Naive thymus-derived CD4-positive, alpha-beta T cell (primary cell): ENCODE measurements at regions of chr2 and their contacts with region 1.

Region 1: GRCh38 chr2:37506407-37507050 is 162.1 kb downstream of the QPCT start:
- DNase-seq: no peak
- ATAC-seq: no peak
- H3K4me3 ChIP-seq: no peak overlapping the region
- H3K4me3 Mint-ChIP-seq: no peak overlapping the region
- H3K27ac ChIP-seq: no peak overlapping the region
- H3K27ac Mint-ChIP-seq: no peak overlapping the region
- H3K4me1 ChIP-seq: no peaks in the 10 kb centered on the region
- H3K4me1 Mint-ChIP-seq: peaks cover 0 to 2% (median 0%) of the 10 kb centered on the region in 7 donors
- H3K27me3 ChIP-seq: no peaks in the 10 kb centered on the region
- H3K27me3 Mint-ChIP-seq: peaks cover 4 to 23% (median 5%) of the 10 kb centered on the region in 5 donors

Region 2: GRCh38 chr2:37149626-37150322 is 356.8 kb before region 1 on chr2:
- CTCF ChIA-PET with region 1: no interaction called
- POLR2A ChIA-PET with region 1: no interaction called
- intact Hi-C with region 1: no loop called
- DNase-seq: no peak
- ATAC-seq: peak; percentile 73
- H3K4me3 ChIP-seq: no peak overlapping the region
- H3K4me3 Mint-ChIP-seq: peak overlapping the region in 5 of 10 donors; percentile 5 to 24 (median 12)
- H3K27ac ChIP-seq: no peak overlapping the region
- H3K27ac Mint-ChIP-seq: peak overlapping the region in 6 of 9 donors; percentile 2 to 73 (median 42)
- H3K4me1 ChIP-seq: peaks cover 4 to 9% of the 10 kb centered on the region in 2 donors
- H3K4me1 Mint-ChIP-seq: peaks cover 13 to 58% (median 48%) of the 10 kb centered on the region in 7 donors
- H3K27me3 ChIP-seq: no peaks in the 10 kb centered on the region
- H3K27me3 Mint-ChIP-seq: no peaks in the 10 kb centered on the region

Region 3: DNA sequence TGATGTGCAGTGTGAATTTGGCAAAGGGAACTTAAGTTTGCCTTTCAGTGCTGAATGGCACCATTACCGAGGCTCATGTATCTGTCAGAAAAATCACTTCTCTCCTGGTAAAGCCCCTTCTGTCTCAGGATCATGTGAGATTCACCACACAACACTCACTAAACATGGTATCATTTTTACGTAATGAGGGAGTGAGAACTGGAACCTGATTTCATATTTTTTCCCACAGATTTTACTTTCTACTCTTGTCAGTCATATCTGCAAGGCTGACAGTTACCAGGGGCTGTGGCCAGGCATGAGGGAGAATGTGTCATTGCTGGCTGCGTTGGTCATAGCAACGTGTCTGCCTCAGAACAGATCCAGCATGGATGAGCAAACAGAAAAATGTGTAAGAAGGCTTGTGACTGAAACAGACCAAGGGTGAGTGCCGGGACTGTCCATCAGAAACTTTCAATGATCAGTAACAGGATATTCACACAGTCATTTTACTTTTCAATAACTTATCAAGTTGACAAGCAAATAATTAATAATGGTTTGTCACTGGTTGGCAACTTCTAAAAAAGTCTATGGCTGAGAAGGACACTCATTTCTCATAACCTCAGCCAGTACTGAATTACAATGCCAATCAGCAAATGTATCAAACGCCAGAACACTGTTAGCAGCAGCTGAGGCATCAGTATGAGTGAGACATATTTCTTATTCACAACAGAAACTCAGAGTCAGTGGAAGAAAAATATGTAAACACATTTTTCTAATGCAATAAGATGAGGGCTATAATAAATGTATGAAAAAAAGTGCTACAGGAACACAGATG is 64.5 kb after region 1 on chr2:
- CTCF ChIA-PET with region 1: no interaction called
- POLR2A ChIA-PET with region 1: no interaction called
- intact Hi-C with region 1: loop called in 1 of 2 experiments (anchors 2 kb)
- DNase-seq: no peak
- ATAC-seq: no peak
- H3K4me3 ChIP-seq: no peak overlapping the region
- H3K4me3 Mint-ChIP-seq: no peak overlapping the region
- H3K27ac ChIP-seq: no peak overlapping the region
- H3K27ac Mint-ChIP-seq: no peak overlapping the region
- H3K4me1 ChIP-seq: peaks cover 0 to 11% of the 10 kb centered on the region in 2 donors
- H3K4me1 Mint-ChIP-seq: peaks cover 6 to 23% (median 10%) of the 10 kb centered on the region in 7 donors
- H3K27me3 ChIP-seq: no peaks in the 10 kb centered on the region
- H3K27me3 Mint-ChIP-seq: peaks cover 0 to 7% (median 0%) of the 10 kb centered on the region in 5 donors

Region 4: DNA sequence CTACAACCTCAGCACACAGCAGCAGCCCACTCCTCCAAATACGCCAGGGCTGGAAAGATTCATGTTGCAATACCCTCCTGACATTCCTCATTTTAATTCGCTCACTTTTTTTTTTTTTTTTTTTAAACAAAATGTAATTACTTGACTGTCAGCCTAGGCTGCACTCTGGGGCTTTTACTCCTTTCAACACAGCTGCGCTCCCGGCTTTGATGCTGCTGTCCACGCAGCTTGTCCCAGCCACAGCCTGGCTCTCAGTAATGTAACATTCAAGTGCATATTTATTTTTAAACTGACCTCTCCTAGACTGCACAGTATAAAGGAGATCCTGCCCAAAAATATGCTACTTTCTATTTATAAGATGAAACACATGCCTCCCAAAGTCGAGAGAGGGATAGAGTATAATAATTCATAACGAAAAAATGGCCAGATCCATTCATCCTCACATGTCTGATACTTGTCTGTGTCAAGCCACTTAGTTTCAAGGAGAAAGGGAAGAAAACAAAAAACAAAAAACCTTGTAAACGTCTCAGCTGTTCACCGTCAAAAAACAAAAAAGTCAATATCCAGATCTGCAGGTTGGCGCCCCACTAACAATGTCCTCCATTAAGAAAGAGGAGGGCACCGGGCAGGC is 164.0 kb after region 1 on chr2:
- CTCF ChIA-PET with region 1: no interaction called
- POLR2A ChIA-PET with region 1: no interaction called
- intact Hi-C with region 1: no loop called
- DNase-seq: no peak
- ATAC-seq: no peak
- H3K4me3 ChIP-seq: peak overlapping the region; percentile 92
- H3K4me3 Mint-ChIP-seq: peak overlapping the region; percentile 85 to 98 (median 94)
- H3K27ac ChIP-seq: peak overlapping the region; percentile 72
- H3K27ac Mint-ChIP-seq: peak overlapping the region; percentile 73 to 91 (median 82)
- H3K4me1 ChIP-seq: peaks cover 26 to 39% of the 10 kb centered on the region in 2 donors
- H3K4me1 Mint-ChIP-seq: peaks cover 41 to 58% (median 56%) of the 10 kb centered on the region in 7 donors
- H3K27me3 ChIP-seq: no peaks in the 10 kb centered on the region
- H3K27me3 Mint-ChIP-seq: peaks cover 0 to 2% (median 0%) of the 10 kb centered on the region in 5 donors